OCI-LY7 (cell line): ENCODE measurements at regions of chr1 and their contacts with region 1.

Region 1: DNA sequence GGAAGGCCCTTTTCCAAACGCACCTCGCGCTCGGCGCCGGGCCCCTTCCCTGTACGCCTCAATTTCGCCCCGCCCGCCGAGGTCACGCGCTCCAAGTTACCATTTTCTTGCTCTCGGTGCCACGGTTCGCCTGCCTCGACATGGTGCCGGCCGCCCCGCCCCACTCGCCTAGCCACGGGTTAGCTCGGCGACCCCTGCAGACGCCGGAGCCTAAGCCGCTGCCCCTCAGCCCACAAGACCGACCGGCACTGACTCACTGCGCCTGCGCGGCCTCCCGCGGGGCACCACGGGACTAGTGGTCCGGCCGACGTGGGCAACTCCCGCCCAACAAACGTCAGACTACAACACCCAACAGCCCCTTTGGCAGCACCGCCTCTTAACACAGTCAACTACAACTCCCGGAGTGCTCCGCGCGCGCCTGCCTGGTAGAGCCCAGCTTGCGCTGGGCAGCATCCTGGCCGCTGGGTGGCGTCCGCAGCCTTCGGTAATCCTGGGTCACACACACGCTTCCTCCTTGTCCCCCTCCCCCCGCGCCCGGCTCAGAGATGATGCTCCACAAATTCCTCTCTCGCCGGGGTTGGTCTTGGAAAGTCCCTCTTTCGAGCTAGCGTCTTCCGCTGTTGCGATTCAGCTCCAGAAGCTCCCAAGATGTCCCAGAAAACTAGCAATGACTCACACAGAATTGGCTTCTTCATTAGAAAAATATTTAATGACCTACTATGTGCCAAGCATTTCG is at the start of gene TRAPPC3:
- DNase-seq: peak; percentile 100
- H3K4me3 ChIP-seq: peak within 1 kb of the TSS; percentile 97
- H3K27ac ChIP-seq: peak within 1 kb of the TSS; percentile 49
- H3K4me1 ChIP-seq: peaks cover 54% of the 10 kb centered on the region
- CTCF ChIP-seq: peak; percentile 98
- total RNA-seq, gene TRAPPC3: 50.3 and 71.0 TPM in 2 replicates

Region 2: GRCh38 chr1:36160949-36161485 is 11.6 kb after region 1 on chr1:
- CTCF ChIA-PET with region 1: interaction called, 3 read pairs
- POLR2A ChIA-PET with region 1: interaction called, 13 read pairs
- intact Hi-C with region 1: no loop called
- DNase-seq: peak; percentile 79
- H3K4me3 ChIP-seq: peak overlapping the region; percentile 65
- H3K27ac ChIP-seq: peak overlapping the region; percentile 87
- H3K4me1 ChIP-seq: peaks cover 64% of the 10 kb centered on the region
- CTCF ChIP-seq: peak; percentile 70

Region 3: DNA sequence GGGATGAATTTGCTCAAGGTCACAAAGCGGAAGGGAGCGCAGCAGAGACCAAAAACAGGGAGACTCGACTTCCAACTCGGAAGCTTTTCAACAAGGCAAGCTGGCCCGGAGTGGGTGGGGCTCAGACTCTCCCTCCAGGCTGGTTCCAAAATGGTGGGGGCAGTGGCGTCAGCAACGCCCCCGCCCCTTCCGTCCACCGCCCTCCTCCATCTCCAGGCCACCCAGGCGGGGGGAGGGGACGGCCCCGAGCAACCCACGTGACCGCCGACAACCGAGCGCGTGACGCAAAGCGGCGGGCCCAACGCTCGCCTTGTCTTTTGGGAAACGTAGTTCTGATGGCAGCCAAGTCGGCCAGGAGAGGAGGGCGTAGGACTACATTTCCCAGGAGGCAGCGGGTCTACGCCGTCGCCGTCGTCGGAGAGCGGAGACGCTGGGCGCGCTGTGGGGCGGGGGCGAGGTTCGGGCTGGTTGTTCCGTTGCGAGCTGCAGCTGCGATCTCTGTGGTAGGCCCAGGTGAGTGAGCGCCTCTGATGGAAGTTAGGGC is 74.7 kb after region 1 on chr1 and contains the start of gene THRAP3:
- CTCF ChIA-PET with region 1: no interaction called
- POLR2A ChIA-PET with region 1: interaction called, 5 read pairs
- intact Hi-C with region 1: loop called (anchors 1 kb)
- DNase-seq: peak; percentile 100
- H3K4me3 ChIP-seq: peak within 1 kb of the TSS; percentile 85
- H3K27ac ChIP-seq: peak within 1 kb of the TSS; percentile 88
- H3K4me1 ChIP-seq: peaks cover 24% of the 10 kb centered on the region
- CTCF ChIP-seq: no peak
- total RNA-seq, gene THRAP3: 76.1 and 98.7 TPM in 2 replicates

Region 4: DNA sequence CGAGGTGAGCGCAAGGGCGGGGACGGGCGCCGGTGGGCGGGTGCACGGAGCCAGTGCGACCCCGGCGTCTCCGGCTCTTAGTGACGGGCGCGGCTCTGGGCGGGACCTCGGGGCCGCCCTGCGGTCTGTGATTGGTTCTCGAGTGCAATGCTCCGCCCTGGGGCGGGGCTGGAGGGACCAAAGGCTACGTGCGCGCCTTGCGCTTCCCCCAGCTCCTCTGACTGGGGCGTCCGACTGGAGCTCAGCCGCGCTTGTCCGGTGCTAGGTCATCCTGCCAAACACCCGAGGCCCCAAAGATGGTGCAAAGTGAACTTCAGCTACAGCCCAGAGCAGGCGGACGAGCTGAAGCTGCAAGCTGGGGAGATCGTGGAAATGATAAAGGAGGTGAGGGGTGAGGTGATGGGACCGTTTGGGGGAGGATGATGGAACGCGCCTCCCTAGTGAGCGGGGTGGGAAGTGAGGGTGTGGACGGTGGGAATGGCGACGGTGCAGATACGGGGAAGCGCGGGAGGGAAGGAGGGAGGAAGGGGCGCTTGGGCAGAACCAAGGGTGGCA is 157.6 kb after region 1 on chr1:
- CTCF ChIA-PET with region 1: no interaction called
- POLR2A ChIA-PET with region 1: no interaction called
- intact Hi-C with region 1: loop called (anchors 5 kb)
- DNase-seq: peak; percentile 97
- H3K4me3 ChIP-seq: peak overlapping the region; percentile 65
- H3K27ac ChIP-seq: peak overlapping the region; percentile 29
- H3K4me1 ChIP-seq: peaks cover 25% of the 10 kb centered on the region
- CTCF ChIP-seq: no peak

Region 5: GRCh38 chr1:36420836-36421664 is 271.6 kb after region 1 on chr1:
- CTCF ChIA-PET with region 1: no interaction called
- POLR2A ChIA-PET with region 1: no interaction called
- intact Hi-C with region 1: loop called (anchors 2 kb)
- DNase-seq: peak; percentile 89
- H3K4me3 ChIP-seq: no peak overlapping the region
- H3K27ac ChIP-seq: peak overlapping the region; percentile 22
- H3K4me1 ChIP-seq: peaks cover 11% of the 10 kb centered on the region
- CTCF ChIP-seq: peak; percentile 98